K562 (cell line): ENCODE measurements at regions of chrX and their contacts with region 1.

Region 1: DNA sequence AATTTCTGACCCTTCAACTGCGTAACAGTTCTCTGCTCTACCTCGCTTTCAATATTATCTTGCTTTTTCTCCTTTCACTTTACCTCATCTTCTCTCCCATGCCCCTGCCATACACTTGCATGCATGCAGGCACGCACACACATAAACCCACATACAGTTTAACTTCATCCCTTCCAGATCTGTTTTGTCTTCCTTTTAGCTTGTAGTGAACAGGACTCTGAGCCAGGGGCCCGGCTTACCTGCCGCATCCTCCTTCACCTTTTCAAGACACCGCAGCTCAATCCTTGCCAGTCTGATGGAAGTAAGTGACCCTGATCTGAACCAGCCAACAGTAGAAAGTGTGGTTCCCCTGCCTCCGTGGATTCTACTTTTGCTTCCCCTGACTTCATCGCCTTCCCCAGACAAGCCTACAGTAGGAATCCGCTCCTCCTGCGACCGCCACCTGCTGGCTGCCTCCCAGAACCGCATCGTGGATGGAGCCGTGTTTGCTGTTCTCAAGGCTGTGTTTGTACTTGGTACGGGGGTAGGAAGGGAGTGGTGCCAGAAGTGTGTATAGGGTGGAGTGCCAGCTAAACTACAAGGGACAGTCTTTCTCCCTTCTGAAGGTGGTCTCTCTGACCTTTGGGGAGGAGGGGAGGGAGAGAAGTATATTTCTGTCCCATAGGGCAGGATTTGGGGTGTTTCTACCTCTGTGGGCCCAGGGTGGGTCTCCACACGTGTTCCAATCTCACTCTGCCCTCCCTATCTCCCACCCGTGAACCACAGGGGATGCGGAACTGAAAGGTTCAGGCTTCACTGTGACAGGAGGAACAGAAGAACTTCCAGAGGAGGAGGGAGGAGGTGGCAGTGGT is 10.7 kb downstream of the MED12 start:
- DNase-seq: peak; percentile 65 to 83 (median 68)
- ATAC-seq: peak; percentile 90
- H3K4me3 ChIP-seq: no peak overlapping the region
- H3K27ac ChIP-seq: peak overlapping the region; percentile 36; the same call in 1 of the 3 replicates
- H3K4me1 ChIP-seq: peaks cover 24 to 34% of the 10 kb centered on the region in 2 experiments; a peak in 4 of 5 replicates
- H3K27me3 ChIP-seq: no peaks in the 10 kb centered on the region
- CTCF ChIP-seq: peak; percentile 80 to 91 (median 88)
- EP300 ChIP-seq: no peak
- POLR2A ChIP-seq: no peak
- RAD21 ChIP-seq: peak; percentile 74 to 83

Region 2: DNA sequence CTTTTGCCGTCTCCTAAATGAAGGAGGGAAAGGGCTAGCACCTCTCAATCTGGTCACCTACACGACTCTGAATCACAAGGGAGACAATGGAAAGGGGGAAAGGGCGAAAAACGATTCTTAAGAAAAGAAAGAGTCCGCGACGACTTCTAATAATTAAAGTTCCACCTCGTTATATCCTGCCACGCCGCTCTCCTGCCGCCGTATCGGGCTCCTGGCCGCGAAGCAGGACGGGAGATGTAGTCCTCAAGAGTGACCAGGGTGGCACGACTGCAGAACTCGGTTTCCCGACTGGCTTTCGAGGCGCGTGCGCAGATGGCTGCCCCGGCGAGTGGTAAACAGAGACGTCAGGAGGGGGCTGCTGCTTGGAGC is 33.6 kb before region 1 on chrX and contains the start of gene FOXO4:
- CTCF ChIA-PET with region 1: interaction called, 6 read pairs
- POLR2A ChIA-PET with region 1: no interaction called
- in situ Hi-C with region 1: no loop called
- intact Hi-C with region 1: loop called (anchors 1 kb)
- DNase-seq: peak in 2 of 4 experiments; percentile 89 to 93
- ATAC-seq: peak; percentile 90
- H3K4me3 ChIP-seq: peak within 1 kb of the TSS; percentile 59
- H3K27ac ChIP-seq: peak within 1 kb of the TSS; percentile 67
- H3K4me1 ChIP-seq: peaks cover 16 to 24% of the 10 kb centered on the region in 2 experiments; a peak in 4 of 5 replicates
- H3K27me3 ChIP-seq: no peaks in the 10 kb centered on the region
- CTCF ChIP-seq: no peak
- EP300 ChIP-seq: no peak
- POLR2A ChIP-seq: peak; percentile 63
- RAD21 ChIP-seq: no peak
- polyA plus RNA-seq, gene FOXO4: 0.13 to 0.14 TPM

Region 3: GRCh38 chrX:71118032-71118984 is 10.8 kb before region 1 on chrX and contains the start of gene MED12:
- CTCF ChIA-PET with region 1: no interaction called
- POLR2A ChIA-PET with region 1: interaction called, 29 read pairs
- in situ Hi-C with region 1: no loop called
- intact Hi-C with region 1: no loop called
- DNase-seq: peak; percentile 86 to 89 (median 88)
- ATAC-seq: peak; percentile 99
- H3K4me3 ChIP-seq: peak within 1 kb of the TSS; percentile 89
- H3K27ac ChIP-seq: peak within 1 kb of the TSS; percentile 91
- H3K4me1 ChIP-seq: peaks cover 8% of the 10 kb centered on the region in 2 experiments; a peak in 4 of 5 replicates
- H3K27me3 ChIP-seq: no peaks in the 10 kb centered on the region
- CTCF ChIP-seq: no peak
- EP300 ChIP-seq: no peak
- POLR2A ChIP-seq: peak; percentile 75
- RAD21 ChIP-seq: no peak
- polyA plus RNA-seq, gene MED12: 1.6 to 2.8 TPM